B cell (primary cell): ENCODE measurements at regions of chr1 and their contacts with region 1.

Region 1: GRCh38 chr1:28259307-28260167 is at the start of gene SESN2:
- DNase-seq: peak; percentile 98
- ATAC-seq: peak; percentile 99
- H3K4me3 ChIP-seq: peak within 1 kb of the TSS; percentile 65 to 96 (median 92)
- H3K4me3 Mint-ChIP-seq: peak within 1 kb of the TSS; percentile 84
- H3K27ac ChIP-seq: peak within 1 kb of the TSS in 1 of 2 donors; percentile 64
- H3K27ac Mint-ChIP-seq: peak within 1 kb of the TSS; percentile 75
- H3K4me1 ChIP-seq: peaks cover 22% of the 10 kb centered on the region in 2 donors
- H3K4me1 Mint-ChIP-seq: peaks cover 19% of the 10 kb centered on the region
- H3K27me3 ChIP-seq: peaks cover 0 to 4% (median 1%) of the 10 kb centered on the region in 4 experiments
- H3K27me3 Mint-ChIP-seq: peaks cover 16% of the 10 kb centered on the region
- CTCF ChIP-seq: no peak
- total RNA-seq, gene SESN2: 4.5 and 4.8 TPM in 2 replicates

Region 2: GRCh38 chr1:27145934-27146354 is 1113.6 kb before region 1 on chr1:
- CTCF ChIA-PET with region 1: no interaction called
- POLR2A ChIA-PET with region 1: interaction called, 11 read pairs
- intact Hi-C with region 1: no loop called
- DNase-seq: no peak
- ATAC-seq: no peak
- H3K4me3 ChIP-seq: no peak overlapping the region
- H3K4me3 Mint-ChIP-seq: no peak overlapping the region
- H3K27ac ChIP-seq: no peak overlapping the region
- H3K27ac Mint-ChIP-seq: no peak overlapping the region
- H3K4me1 ChIP-seq: peaks cover 3 to 23% of the 10 kb centered on the region in 2 donors
- H3K4me1 Mint-ChIP-seq: peaks cover 33% of the 10 kb centered on the region
- H3K27me3 ChIP-seq: no peaks in the 10 kb centered on the region
- H3K27me3 Mint-ChIP-seq: no peaks in the 10 kb centered on the region
- CTCF ChIP-seq: no peak

Region 3: DNA sequence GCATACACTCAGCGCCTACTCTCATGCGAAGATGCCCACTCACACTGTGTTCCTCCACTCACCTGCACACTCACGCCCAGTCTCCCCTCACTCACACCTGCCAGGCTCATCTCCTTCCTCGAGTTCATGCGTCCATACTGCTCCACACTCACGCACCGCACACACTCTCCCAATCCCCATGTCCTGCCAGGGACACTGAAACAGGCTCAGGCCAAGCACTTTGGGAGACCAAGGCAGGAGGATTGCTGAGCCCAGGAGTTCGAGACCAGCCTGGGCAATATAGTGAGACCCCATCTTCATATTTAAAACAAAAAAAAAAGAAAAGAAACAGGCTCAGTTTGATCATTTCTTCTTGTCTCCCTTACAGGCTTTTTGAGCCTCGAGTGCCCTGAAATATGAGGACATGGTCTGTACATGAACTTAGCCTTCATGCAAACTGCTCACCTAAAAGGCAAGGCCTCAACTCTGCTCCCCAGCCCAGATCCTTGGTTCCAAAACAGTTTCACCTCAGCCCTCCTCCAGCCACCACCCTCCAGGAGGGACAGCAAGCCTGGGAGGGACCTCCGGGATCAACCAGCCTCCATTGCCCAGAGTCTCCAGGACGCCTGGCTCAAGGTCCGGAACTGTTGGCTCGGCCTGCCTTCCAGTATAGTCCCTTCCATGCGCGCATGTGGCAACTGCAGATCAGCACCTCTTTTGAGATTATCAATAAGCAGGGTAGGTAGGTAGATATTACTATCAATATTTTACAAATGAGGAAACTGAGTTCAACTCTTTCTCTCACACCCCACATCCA is 80.6 kb before region 1 on chr1:
- CTCF ChIA-PET with region 1: no interaction called
- POLR2A ChIA-PET with region 1: no interaction called
- intact Hi-C with region 1: no loop called
- DNase-seq: no peak
- ATAC-seq: no peak
- H3K4me3 ChIP-seq: no peak overlapping the region
- H3K4me3 Mint-ChIP-seq: peak overlapping the region; percentile 14
- H3K27ac ChIP-seq: no peak overlapping the region
- H3K27ac Mint-ChIP-seq: no peak overlapping the region
- H3K4me1 ChIP-seq: peaks cover 62 to 70% of the 10 kb centered on the region in 2 donors
- H3K4me1 Mint-ChIP-seq: peaks cover 78% of the 10 kb centered on the region
- H3K27me3 ChIP-seq: no peaks in the 10 kb centered on the region
- H3K27me3 Mint-ChIP-seq: no peaks in the 10 kb centered on the region
- CTCF ChIP-seq: no peak

Region 4: GRCh38 chr1:28235755-28236655 is 23.5 kb before region 1 on chr1 and contains the start of gene ATP5IF1:
- CTCF ChIA-PET with region 1: no interaction called
- POLR2A ChIA-PET with region 1: no interaction called
- intact Hi-C with region 1: loop called (anchors 1 kb)
- DNase-seq: peak; percentile 96
- ATAC-seq: peak; percentile 96
- H3K4me3 ChIP-seq: peak within 1 kb of the TSS; percentile 80 to 99 (median 97)
- H3K4me3 Mint-ChIP-seq: no peak within 1 kb of the TSS
- H3K27ac ChIP-seq: peak within 1 kb of the TSS; percentile 72 to 73
- H3K27ac Mint-ChIP-seq: no peak within 1 kb of the TSS
- H3K4me1 ChIP-seq: peaks cover 17 to 40% of the 10 kb centered on the region in 2 donors
- H3K4me1 Mint-ChIP-seq: peaks cover 20% of the 10 kb centered on the region
- H3K27me3 ChIP-seq: no peaks in the 10 kb centered on the region
- H3K27me3 Mint-ChIP-seq: no peaks in the 10 kb centered on the region
- CTCF ChIP-seq: no peak
- total RNA-seq, gene ATP5IF1: 81.1 and 88.1 TPM in 2 replicates

Region 5: DNA sequence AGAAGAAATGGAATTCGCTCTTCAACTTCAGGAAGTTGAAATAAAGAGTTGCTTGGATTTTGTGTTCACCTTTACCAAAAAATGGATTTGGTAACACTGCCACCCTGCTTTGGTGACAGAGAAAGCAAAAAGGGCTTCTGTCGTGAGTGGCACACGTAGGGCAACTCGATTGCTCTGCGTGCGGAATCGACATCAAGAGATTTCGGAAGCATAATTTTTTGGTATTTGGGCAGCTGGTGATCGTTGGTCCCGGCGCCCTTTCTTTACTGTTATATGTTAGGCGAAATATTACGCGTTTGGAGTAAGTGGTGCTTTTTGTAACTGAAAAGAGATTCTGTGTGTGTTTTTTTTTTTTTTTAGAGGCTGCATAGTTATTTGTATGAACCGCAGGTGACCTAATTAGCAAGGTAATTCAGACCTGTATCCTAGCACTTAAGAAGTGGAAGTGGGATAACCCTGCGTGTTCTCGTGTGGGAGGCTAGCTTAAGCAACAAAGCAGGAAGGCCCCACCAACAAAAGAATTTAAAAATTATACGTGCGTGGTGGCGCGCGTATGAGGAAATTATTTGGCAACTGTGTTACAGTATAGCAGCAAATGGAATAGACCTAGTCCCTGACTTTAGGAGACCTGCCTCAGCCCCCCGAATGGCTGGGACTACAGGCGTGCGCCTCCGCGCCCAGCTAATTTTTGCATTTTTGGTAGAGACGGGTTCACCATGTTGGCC is 389.1 kb after region 1 on chr1 and contains the start of gene RNU11:
- CTCF ChIA-PET with region 1: no interaction called
- POLR2A ChIA-PET with region 1: no interaction called
- intact Hi-C with region 1: loop called (anchors 1 kb)
- DNase-seq: peak; percentile 98
- ATAC-seq: peak; percentile 72
- H3K4me3 ChIP-seq: peak within 1 kb of the TSS; percentile 9 to 60 (median 53)
- H3K4me3 Mint-ChIP-seq: peak within 1 kb of the TSS; percentile 94
- H3K27ac ChIP-seq: peak within 1 kb of the TSS; percentile 93 to 100
- H3K27ac Mint-ChIP-seq: peak within 1 kb of the TSS; percentile 100
- H3K4me1 ChIP-seq: peaks cover 25 to 33% of the 10 kb centered on the region in 2 donors
- H3K4me1 Mint-ChIP-seq: peaks cover 32% of the 10 kb centered on the region
- H3K27me3 ChIP-seq: no peaks in the 10 kb centered on the region
- H3K27me3 Mint-ChIP-seq: no peaks in the 10 kb centered on the region
- CTCF ChIP-seq: no peak
- total RNA-seq, gene RNU11: not detected in 2 replicates